HEK293 (cell line): ENCODE measurements at regions of chrX and their contacts with region 1.

Region 1: GRCh38 chrX:16882702-16883486 is 12.7 kb upstream of the RBBP7 start:
- H3K4me3 ChIP-seq: peak overlapping the region; percentile 48
- H3K27ac ChIP-seq: no peak overlapping the region
- H3K4me1 ChIP-seq: no peaks in the 10 kb centered on the region
- CTCF ChIP-seq: peak; percentile 22; the same call in 1 of the 2 replicates

Region 2: DNA sequence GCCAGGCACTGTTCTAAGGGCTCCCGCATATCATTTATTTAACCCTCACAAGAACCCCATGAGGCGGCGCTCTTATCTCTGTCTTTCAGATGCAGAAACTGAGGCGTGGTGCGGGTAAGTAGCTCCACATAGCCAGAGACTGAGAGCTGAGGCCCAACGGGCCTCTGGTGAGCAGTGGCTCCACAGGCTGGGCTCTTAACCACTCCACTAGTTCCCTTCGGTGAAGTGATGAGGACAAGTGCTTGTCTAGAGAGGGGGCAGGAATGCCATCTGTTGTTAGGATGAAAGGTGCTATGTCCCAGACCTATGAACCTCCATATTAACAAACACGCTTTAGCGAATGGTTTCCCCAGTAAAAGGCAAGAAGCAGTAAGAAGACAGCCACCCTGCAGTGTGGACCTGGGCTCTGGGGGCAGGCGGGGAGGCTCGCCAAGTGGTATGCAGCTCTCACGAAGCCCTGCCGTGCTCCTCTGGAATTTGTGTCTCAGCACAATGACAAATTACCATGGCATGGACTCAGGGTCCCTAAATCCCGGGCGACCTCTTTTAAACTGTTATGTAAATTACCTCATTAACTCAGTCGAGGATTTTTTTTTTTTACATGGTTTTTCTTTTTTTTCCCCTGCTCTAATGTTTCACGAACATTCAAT is 253.8 kb before region 1 on chrX:
- CTCF ChIA-PET with region 1: no interaction called
- POLR2A ChIA-PET with region 1: no interaction called
- H3K4me3 ChIP-seq: no peak overlapping the region
- H3K27ac ChIP-seq: no peak overlapping the region
- H3K4me1 ChIP-seq: no peaks in the 10 kb centered on the region
- CTCF ChIP-seq: no peak

Region 3: DNA sequence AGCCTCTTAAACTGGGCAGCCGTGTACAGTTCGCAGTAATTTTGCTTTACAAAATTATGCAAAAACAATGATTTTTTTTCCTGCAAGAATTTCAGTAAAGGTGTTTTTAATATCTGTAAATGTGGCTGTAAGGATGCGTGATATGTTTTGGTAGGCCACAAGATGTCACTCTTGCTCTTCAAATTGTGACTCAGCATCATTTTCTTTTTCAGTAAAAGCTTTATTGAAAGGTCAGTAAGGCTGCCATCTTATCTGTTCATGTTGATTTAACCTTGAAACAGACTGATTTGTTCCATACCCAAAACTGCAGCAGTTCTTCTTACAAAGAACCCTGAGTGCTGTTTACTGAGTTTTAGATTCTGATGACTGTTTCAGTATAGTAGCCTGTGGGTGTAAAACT is 56.7 kb before region 1 on chrX:
- CTCF ChIA-PET with region 1: interaction called, 11 read pairs
- POLR2A ChIA-PET with region 1: no interaction called
- H3K4me3 ChIP-seq: no peak overlapping the region
- H3K27ac ChIP-seq: no peak overlapping the region
- H3K4me1 ChIP-seq: peaks cover 13% of the 10 kb centered on the region
- CTCF ChIP-seq: no peak; the same call in 1 of the 2 replicates

Region 4: DNA sequence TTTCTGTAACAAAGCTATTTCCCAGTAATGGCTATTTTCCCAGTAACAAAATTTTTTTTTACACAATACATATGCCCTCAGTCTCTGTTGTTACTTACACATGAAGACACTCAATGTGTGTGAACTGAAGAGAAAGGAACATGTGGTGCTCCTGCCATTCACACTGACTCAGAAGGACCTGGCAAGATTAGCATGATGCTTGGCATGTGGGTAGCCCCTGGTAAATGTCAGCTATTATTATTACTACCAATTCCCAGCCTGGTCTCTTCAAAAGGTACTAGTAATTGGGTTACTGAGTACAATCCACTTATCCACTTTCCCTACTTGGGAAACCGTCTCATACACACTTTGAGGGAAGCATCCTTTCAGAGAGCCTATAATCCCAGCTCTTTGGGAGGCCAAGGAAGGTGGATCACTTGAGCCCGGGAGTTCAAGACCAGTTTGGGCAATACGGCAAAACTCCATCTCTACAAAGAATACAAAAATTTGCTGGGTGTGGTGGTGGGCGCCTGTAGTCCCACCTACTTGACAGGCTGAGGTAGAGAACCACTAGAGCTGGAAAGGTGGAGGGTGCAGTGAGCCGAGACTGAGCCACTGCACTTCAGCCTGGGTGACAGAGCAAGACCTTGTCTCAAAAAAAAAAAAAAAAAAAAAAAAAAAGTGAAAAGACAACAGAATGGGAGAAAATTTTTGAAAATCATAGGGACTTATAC is 27.4 kb before region 1 on chrX:
- CTCF ChIA-PET with region 1: interaction called, 10 read pairs
- POLR2A ChIA-PET with region 1: no interaction called
- H3K4me3 ChIP-seq: no peak overlapping the region
- H3K27ac ChIP-seq: no peak overlapping the region
- H3K4me1 ChIP-seq: no peaks in the 10 kb centered on the region
- CTCF ChIP-seq: no peak

Region 5: GRCh38 chrX:16917120-16917519 is 34.2 kb after region 1 on chrX:
- CTCF ChIA-PET with region 1: interaction called, 15 read pairs
- POLR2A ChIA-PET with region 1: interaction called, 3 read pairs
- H3K4me3 ChIP-seq: no peak overlapping the region
- H3K27ac ChIP-seq: no peak overlapping the region
- H3K4me1 ChIP-seq: no peaks in the 10 kb centered on the region
- CTCF ChIP-seq: no peak

Region 6: DNA sequence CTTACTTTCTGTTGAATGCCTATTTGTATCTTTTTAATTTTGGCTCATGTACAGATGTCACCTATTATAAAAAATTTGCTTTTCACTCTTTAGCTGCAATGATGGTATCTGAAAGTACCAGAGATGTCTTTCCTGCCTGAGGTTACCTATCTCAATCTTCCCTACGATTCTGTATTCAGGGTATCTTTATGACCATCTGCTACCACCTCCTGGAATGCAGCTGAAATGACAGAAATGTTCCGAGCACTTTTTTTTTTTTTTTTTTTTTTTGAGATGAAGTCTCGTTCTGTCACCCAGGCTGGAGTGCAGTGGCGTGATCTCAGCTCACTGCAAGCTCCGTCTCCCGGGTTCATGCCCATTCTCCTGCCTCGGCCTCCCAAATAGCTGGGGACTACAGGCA is 199.9 kb after region 1 on chrX:
- CTCF ChIA-PET with region 1: interaction called, 26 read pairs
- POLR2A ChIA-PET with region 1: no interaction called
- H3K4me3 ChIP-seq: no peak overlapping the region
- H3K27ac ChIP-seq: no peak overlapping the region
- H3K4me1 ChIP-seq: no peaks in the 10 kb centered on the region
- CTCF ChIP-seq: peak; percentile 43; the same call in 1 of the 2 replicates